Activated naive CD4-positive, alpha-beta T cell treated with anti-CD3 and anti-CD28 coated beads, Interleukin-2, amount 10 ng/mL, durations not matched to agents 7 days and 5 days (primary cell): ENCODE measurements at regions of chr13 and their contacts with region 1.

Region 1: DNA sequence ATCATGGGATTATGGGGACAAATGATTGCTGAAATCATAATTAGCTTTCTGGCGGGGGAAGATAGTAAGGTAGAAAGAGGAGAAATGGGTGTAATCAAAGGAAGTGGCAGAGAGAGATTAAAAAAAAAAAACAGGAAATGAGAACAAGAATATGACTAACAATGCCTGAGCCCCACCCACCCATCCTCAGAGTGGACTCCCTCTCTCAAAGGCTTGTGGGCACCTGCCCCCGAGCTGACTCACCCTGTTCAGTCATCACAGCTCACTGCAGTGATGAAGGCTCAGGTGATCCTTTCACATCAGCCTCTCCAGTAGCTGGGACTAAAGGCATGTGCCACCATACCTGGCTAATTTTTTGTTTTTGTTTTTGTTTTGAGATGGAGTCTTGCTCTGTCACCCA is 26.4 kb upstream of the TPT1 start:
- DNase-seq: peak; percentile 95
- H3K4me3 Mint-ChIP-seq: peak overlapping the region; percentile 0
- H3K27ac Mint-ChIP-seq: peak overlapping the region; percentile 90
- H3K4me1 Mint-ChIP-seq: peaks cover 74% of the 10 kb centered on the region
- H3K27me3 Mint-ChIP-seq: no peaks in the 10 kb centered on the region

Region 2: DNA sequence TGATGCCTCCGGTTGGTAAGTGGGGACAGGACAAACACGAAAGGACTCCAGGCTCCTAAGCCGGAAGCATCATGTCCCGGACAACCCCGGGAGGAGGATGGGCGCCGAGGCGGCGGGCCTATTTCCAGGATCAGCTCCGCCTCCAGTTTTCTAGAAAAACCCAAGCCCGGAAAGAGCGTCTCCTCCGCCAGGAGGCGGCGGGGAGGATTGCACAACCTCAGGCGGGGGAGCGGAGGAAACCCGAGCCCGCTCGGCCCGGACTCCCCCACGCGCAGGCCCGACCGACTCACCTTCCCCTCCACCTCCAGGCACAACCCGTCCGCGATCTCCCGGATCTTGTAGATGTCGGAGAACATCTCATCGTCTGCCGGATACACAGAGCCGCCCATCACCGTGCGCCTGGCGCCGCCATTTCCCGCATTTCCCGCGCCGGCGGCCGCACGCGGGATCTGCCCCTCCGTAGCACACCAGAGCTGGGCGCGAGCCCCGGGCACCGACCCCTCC is 26.9 kb before region 1 on chr13:
- CTCF ChIA-PET with region 1: interaction called, 19 read pairs
- DNase-seq: peak; percentile 87
- H3K4me3 Mint-ChIP-seq: peak overlapping the region; percentile 99
- H3K27ac Mint-ChIP-seq: peak overlapping the region; percentile 100
- H3K4me1 Mint-ChIP-seq: peaks cover 70% of the 10 kb centered on the region
- H3K27me3 Mint-ChIP-seq: peaks cover 4% of the 10 kb centered on the region

Region 3: GRCh38 chr13:45385907-45386553 is 18.7 kb after region 1 on chr13:
- CTCF ChIA-PET with region 1: interaction called, 18 read pairs
- DNase-seq: no peak
- H3K4me3 Mint-ChIP-seq: no peak overlapping the region
- H3K27ac Mint-ChIP-seq: no peak overlapping the region
- H3K4me1 Mint-ChIP-seq: peaks cover 4% of the 10 kb centered on the region
- H3K27me3 Mint-ChIP-seq: no peaks in the 10 kb centered on the region

Region 4: GRCh38 chr13:45393941-45394570 is 26.7 kb after region 1 on chr13:
- CTCF ChIA-PET with region 1: interaction called, 70 read pairs
- DNase-seq: peak; percentile 53
- H3K4me3 Mint-ChIP-seq: no peak overlapping the region
- H3K27ac Mint-ChIP-seq: no peak overlapping the region
- H3K4me1 Mint-ChIP-seq: peaks cover 48% of the 10 kb centered on the region
- H3K27me3 Mint-ChIP-seq: no peaks in the 10 kb centered on the region

Region 5: GRCh38 chr13:45417790-45418534 is 50.6 kb after region 1 on chr13 and contains the start of gene SLC25A30:
- CTCF ChIA-PET with region 1: interaction called, 10 read pairs
- DNase-seq: peak; percentile 95
- H3K4me3 Mint-ChIP-seq: peak within 1 kb of the TSS; percentile 92
- H3K27ac Mint-ChIP-seq: peak within 1 kb of the TSS; percentile 99
- H3K4me1 Mint-ChIP-seq: peaks cover 24% of the 10 kb centered on the region
- H3K27me3 Mint-ChIP-seq: no peaks in the 10 kb centered on the region

Region 6: DNA sequence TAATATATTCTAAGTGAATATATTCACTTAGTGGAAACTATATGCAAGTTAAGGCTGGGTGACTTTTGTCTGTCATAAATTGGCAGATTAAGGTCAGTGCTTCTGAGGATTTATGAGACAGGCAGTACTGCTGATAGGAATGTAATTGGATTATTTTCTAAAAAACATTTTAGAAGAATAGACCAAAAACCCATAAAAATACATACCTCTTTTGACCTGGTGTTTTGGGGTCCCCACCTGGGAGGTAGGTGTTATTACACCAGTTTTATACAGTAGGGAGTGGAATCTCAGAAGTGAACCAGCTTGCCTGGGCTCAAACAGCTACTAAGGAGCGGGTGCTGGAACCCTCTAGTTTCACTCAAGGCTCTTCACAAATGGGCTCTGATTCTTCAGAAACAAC is 122.7 kb after region 1 on chr13:
- CTCF ChIA-PET with region 1: interaction called, 10 read pairs
- DNase-seq: peak; percentile 35
- H3K4me3 Mint-ChIP-seq: no peak overlapping the region
- H3K27ac Mint-ChIP-seq: no peak overlapping the region
- H3K4me1 Mint-ChIP-seq: no peaks in the 10 kb centered on the region
- H3K27me3 Mint-ChIP-seq: no peaks in the 10 kb centered on the region